ENCODE measurements at regions of chr16 and their contacts with region 1.

Region 1: DNA sequence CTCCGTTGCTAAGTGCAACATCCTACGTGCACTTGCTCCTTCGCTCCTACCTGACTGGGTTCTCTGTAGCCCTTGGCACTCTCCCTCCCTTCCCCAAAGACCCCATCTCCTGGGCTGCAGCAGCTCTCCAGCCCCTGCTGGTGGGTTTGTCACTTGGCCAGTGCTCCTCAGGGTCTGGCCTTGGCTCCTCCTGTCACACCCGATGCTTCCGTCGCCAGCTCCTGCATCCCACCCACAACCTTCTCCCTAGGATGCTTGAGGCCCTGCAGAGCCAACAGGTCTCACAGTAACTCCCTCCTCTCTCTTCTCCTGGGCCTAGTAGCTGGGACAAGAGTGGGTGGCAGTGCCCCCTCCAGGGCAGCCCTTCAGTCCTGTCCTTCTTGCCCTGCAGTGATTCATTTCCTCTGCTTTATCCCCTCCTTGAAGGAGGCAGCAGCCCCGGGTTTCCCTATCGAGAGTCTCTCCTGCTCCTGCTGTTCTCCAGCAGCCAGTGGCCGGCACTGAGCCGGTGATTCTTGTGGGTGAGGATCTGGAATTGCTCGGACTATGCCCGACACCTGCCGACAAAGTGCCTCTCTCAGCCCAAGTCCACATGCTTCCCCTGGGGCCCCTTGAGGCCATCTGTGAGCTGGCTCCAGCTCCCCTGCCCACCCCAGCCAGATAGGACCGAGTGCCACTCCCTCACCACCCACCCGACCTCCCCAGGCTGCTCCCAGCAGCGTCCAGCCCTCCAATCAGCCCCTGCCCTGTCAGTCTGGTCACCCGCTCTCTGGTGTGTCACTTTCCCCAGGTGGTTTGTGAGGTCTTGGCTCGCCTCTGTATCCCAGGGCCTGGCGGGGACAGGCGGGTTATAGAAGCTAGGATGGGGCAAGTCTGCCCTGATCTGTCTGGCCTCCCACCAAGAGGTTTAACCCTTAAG is 3.8 kb downstream of the LITAFD start:
- DNase-seq: peak; percentile 46
- ATAC-seq: peak; percentile 45
- H3K4me3 ChIP-seq: peak overlapping the region in 2 of 3 experiments; percentile 24 to 73; a peak in 3 of 6 replicates
- H3K27ac ChIP-seq: no peak overlapping the region
- H3K4me1 ChIP-seq: peaks cover 58% of the 10 kb centered on the region
- H3K27me3 ChIP-seq: no peaks in the 10 kb centered on the region
- CTCF ChIP-seq: peak; percentile 58
- EP300 ChIP-seq: no peak
- POLR2A ChIP-seq: peak in 1 of 2 experiments; percentile 33; a peak in 1 of 4 replicates
- RAD21 ChIP-seq: no peak; the same call in 1 of the 2 replicates

Region 2: DNA sequence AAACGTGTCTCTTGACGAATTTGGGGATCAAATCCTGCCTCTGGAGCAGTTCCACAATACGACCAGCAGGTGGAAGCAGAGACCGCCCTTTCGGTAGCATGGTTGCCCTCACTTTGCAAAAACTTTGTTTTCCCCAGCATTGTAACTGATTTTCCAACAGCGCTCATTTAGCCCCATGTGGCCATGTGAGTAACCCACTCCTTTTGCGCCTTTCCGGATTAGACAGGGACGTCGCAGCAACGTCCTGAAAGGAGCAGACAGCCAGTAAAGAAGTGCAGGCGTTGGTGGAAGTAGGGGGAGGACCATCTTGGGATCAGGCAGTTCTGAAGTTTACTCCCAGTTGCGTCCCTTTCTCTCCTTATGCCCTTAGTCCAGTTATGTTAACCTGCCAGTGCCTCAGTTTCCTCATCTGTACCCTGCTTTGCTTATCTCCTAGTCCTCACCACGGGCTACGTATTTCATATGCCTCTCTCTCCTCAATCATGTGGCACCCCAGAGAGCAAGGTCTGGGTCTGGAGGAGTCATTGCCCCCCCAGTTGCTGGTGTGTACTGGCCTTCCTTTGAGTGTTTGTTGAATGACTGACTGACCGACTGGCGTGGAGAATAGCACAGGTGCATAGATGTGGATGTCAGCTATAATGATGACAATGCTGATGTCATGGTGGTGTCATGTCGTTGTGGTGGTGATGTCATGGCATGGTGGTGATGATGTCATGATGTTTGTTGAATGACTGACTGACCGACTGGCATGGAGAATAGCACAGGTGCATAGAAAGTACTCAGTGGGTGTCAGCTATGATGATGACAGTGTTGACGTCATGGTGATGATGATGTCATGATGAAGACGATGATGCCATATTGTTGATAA is 317.9 kb before region 1 on chr16:
- CTCF ChIA-PET with region 1: interaction called, 7 read pairs
- POLR2A ChIA-PET with region 1: no interaction called
- in situ Hi-C with region 1: loop called (anchors 5 kb)
- intact Hi-C with region 1: loop called (anchors 2 kb)
- DNase-seq: peak; percentile 97
- ATAC-seq: peak; percentile 68
- H3K4me3 ChIP-seq: no peak overlapping the region
- H3K27ac ChIP-seq: no peak overlapping the region
- H3K4me1 ChIP-seq: peaks cover 53% of the 10 kb centered on the region
- H3K27me3 ChIP-seq: 0 out of 5 replicates have a peak, but pooled peaks cover 0 to 3% of the 10 kb centered on the region in 2 experiments
- CTCF ChIP-seq: peak; percentile 100
- EP300 ChIP-seq: 0 out of 4 replicates have a peak, but pooled peaks of 1 of the 2 experiments have one; percentile 25
- POLR2A ChIP-seq: no peak
- RAD21 ChIP-seq: peak; percentile 100

Region 3: DNA sequence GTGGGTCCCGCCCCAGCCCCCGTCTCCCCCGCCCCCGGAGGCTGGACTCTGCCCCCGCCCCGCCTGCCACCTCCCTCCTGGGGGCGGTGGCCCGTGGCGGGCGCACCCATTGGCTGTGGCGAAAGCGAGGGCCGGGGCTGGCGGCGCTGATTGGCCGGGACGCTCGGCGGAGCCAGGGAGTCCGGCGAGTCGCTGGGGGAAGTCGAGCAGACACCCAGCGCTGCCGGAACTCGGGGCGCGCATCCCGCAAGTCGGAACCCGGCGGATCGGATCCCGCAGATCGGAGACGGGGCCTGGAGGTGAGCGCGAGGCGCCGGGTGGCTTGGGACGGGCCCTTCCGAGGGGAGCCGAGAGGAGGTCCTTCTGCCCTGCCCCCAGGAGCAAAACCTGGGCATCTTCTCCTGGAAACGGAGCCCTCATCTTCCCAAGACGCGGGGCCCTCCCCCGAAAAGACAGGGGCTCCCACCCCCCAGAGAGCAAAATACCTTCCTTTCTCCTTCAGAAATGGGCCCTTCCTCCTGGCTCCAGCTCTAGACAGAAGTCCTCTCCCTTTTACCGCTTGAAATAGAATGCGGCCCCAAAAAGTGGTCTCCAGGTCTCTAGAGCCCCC is 211.4 kb before region 1 on chr16 and contains the start of gene ABAT:
- CTCF ChIA-PET with region 1: no interaction called
- POLR2A ChIA-PET with region 1: interaction called, 3 read pairs
- in situ Hi-C with region 1: loop called (anchors 25 kb)
- intact Hi-C with region 1: no loop called
- DNase-seq: peak; percentile 91
- ATAC-seq: peak; percentile 93
- H3K4me3 ChIP-seq: peak within 1 kb of the TSS; percentile 81 to 94 (median 89)
- H3K27ac ChIP-seq: peak within 1 kb of the TSS; percentile 39
- H3K4me1 ChIP-seq: peaks cover 59% of the 10 kb centered on the region
- H3K27me3 ChIP-seq: no peaks in the 10 kb centered on the region; a peak in 1 of 5 replicates
- CTCF ChIP-seq: 0 out of 2 replicates have a peak, but pooled peaks have one; percentile 9
- EP300 ChIP-seq: peak; percentile 60 to 64; a peak in 2 of 4 replicates
- POLR2A ChIP-seq: peak; percentile 86 to 88
- RAD21 ChIP-seq: peak; percentile 58; the same call in 1 of the 2 replicates
- total RNA-seq, gene ABAT: 97.3 and 123 TPM in 2 replicates

Region 4: GRCh38 chr16:8797364-8798173 is 88.4 kb before region 1 on chr16 and contains the starts of genes PMM2 and TMEM186:
- CTCF ChIA-PET with region 1: no interaction called
- POLR2A ChIA-PET with region 1: interaction called, 11 read pairs
- in situ Hi-C with region 1: no loop called
- intact Hi-C with region 1: no loop called
- DNase-seq: peak; percentile 99
- ATAC-seq: peak; percentile 98
- H3K4me3 ChIP-seq: peak within 1 kb of the TSS; percentile 85 to 87 (median 86)
- H3K27ac ChIP-seq: peak within 1 kb of the TSS; percentile 70
- H3K4me1 ChIP-seq: peaks cover 45% of the 10 kb centered on the region
- H3K27me3 ChIP-seq: no peaks in the 10 kb centered on the region; a peak in 1 of 5 replicates
- CTCF ChIP-seq: no peak; the same call in none of the 2 replicates
- EP300 ChIP-seq: peak; percentile 59 to 63; a peak in 2 of 4 replicates
- POLR2A ChIP-seq: peak; percentile 93 to 97
- RAD21 ChIP-seq: peak; percentile 80
- total RNA-seq, gene PMM2: 93.7 and 100 TPM in 2 replicates
- total RNA-seq, gene TMEM186: 19.2 and 19.3 TPM in 2 replicates

Region 5: DNA sequence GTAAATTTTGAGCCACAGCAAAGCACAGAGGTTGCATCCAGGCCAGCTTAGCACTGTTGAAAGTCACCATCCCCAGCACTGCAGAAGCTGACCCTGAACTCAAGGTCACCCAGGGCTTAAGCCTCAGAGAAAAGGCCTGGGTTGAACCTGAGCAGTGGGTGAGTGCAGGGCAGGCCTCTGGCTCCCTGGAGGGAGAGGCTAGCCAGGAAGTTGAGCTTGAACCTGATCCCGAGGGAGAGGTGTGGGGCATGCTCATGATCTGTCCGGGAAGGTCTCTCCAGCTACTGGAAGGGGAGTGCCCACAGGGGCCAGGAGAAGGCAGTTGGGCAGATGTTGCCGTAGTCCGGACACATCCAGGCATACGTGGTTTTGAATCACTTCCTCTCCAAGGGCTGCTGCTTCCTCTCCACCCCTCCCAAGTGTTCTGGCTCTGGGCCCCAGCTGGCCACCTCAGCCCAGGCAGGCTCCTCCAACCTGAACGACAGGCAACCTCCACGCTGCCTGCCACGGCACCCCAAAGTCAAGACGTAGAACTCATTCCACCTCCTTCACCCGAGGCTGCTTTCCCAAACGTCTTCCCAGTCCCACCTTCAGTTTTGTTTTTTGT is 35.6 kb before region 1 on chr16:
- CTCF ChIA-PET with region 1: no interaction called
- POLR2A ChIA-PET with region 1: interaction called, 10 read pairs
- in situ Hi-C with region 1: no loop called
- intact Hi-C with region 1: no loop called
- DNase-seq: peak; percentile 91
- ATAC-seq: peak; percentile 89
- H3K4me3 ChIP-seq: no peak overlapping the region
- H3K27ac ChIP-seq: peak overlapping the region; percentile 44
- H3K4me1 ChIP-seq: peaks cover 31% of the 10 kb centered on the region
- H3K27me3 ChIP-seq: no peaks in the 10 kb centered on the region
- CTCF ChIP-seq: no peak
- EP300 ChIP-seq: peak in 1 of 2 experiments; percentile 49; a peak in 1 of 4 replicates
- POLR2A ChIP-seq: peak; percentile 45 to 53; a peak in 2 of 4 replicates
- RAD21 ChIP-seq: peak; percentile 66; the same call in 1 of the 2 replicates

Region 6: DNA sequence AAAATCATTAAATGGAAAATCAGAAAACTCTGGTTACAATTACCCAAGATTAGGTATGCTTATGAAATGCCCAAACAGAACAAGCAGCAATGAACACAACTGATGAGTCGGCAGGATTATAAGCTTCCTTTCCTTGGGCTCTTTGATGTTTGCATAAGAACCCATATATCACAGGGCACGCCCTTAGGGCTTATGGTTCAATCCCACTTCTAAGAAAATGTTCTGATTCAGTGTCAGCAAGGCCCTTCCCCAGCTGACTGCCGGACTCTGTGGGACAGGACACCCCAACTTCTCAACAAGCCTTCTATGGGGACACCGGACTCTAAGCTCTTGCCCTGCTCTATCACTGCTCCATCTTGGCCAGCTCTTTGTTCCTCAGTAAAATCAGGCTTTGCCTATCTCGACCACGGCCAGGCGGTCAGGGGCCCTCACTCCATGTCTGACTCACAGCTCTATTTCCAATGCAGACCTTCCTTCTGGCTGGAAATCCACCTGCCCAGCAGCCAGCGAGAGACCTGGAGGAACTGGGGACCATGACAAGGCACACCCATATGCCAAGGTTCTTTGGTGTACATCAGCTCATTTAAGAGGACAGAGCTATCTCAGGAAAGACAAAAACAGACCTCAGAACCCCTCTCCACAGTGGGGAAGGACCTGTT is 23.0 kb after region 1 on chr16:
- CTCF ChIA-PET with region 1: no interaction called
- POLR2A ChIA-PET with region 1: no interaction called
- in situ Hi-C with region 1: no loop called
- intact Hi-C with region 1: no loop called
- DNase-seq: no peak
- ATAC-seq: no peak
- H3K4me3 ChIP-seq: no peak overlapping the region
- H3K27ac ChIP-seq: no peak overlapping the region
- H3K4me1 ChIP-seq: no peaks in the 10 kb centered on the region
- H3K27me3 ChIP-seq: no peaks in the 10 kb centered on the region
- CTCF ChIP-seq: no peak
- EP300 ChIP-seq: no peak
- POLR2A ChIP-seq: no peak
- RAD21 ChIP-seq: no peak

Region 7: GRCh38 chr16:8924214-8924613 is 38.3 kb after region 1 on chr16:
- CTCF ChIA-PET with region 1: no interaction called
- POLR2A ChIA-PET with region 1: no interaction called
- in situ Hi-C with region 1: no loop called
- intact Hi-C with region 1: no loop called
- DNase-seq: no peak
- ATAC-seq: peak; percentile 18
- H3K4me3 ChIP-seq: no peak overlapping the region
- H3K27ac ChIP-seq: no peak overlapping the region
- H3K4me1 ChIP-seq: peaks cover 9% of the 10 kb centered on the region
- H3K27me3 ChIP-seq: no peaks in the 10 kb centered on the region
- CTCF ChIP-seq: no peak
- EP300 ChIP-seq: no peak
- POLR2A ChIP-seq: no peak
- RAD21 ChIP-seq: no peak

Measured in HepG2 (cell line).